ENCODE measurements at regions of chr5 and their contacts with region 1.

Region 1: GRCh38 chr5:132238169-132238744 is 10.6 kb upstream of the P4HA2 start:
- DNase-seq: peak; percentile 82 to 83
- H3K4me3 ChIP-seq: no peak overlapping the region
- H3K27ac ChIP-seq: no peak overlapping the region
- H3K4me1 ChIP-seq: no peaks in the 10 kb centered on the region
- H3K27me3 ChIP-seq: no peaks in the 10 kb centered on the region
- CTCF ChIP-seq: peak; percentile 83 to 86

Region 2: DNA sequence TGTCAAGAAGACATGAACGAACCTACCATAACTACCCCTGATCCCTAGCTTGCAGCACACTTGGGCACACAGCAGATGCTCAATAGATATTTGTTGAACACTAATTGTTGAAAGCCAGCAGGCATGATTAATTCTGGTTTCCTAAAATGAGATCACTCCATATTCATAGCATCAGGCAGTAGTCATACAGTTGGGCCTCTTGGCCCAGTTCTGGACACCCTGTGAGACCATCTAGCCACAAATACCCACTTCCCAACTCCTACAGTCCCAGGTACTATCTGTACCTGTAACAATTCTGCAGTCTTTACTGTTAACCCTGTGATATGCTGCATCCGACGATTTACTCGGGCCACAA is 34.8 kb before region 1 on chr5:
- intact Hi-C with region 1: no loop called
- DNase-seq: no peak
- H3K4me3 ChIP-seq: no peak overlapping the region
- H3K27ac ChIP-seq: no peak overlapping the region
- H3K4me1 ChIP-seq: peaks cover 0 to 18% (median 11%) of the 10 kb centered on the region in 4 donors
- H3K27me3 ChIP-seq: no peaks in the 10 kb centered on the region
- CTCF ChIP-seq: no peak

Region 3: DNA sequence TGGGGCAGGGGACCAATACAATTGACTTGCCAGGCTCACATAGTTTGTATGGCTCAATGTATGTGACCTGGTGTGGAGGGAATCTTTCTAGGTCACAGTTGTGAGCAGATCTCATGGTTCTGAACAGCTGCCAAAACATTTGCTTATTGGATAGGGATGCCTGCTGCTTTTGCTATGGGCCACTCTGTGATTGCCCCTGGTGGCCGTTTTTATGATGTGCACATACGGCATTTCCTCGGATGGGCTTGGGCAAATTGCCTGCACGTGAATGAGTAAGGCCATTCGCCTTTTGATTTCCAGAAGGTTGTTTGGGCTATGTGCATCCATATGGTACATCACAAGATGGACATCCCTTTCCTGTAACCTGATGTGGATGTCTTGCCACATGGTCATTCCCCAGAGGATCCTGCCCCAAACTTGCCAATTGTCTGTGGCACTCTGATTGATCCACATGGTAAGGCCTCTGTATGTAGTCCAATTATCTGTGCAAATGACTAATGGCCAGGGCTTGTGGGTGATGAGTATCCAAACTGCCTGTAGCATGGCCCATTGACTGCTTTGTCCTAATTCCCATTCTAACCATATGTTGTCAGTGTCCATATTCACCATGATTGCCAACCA is 45.3 kb after region 1 on chr5:
- intact Hi-C with region 1: loop called (anchors 2 kb)
- DNase-seq: no peak
- H3K4me3 ChIP-seq: no peak overlapping the region
- H3K27ac ChIP-seq: no peak overlapping the region
- H3K4me1 ChIP-seq: peaks cover 0 to 12% (median 9%) of the 10 kb centered on the region in 4 donors
- H3K27me3 ChIP-seq: no peaks in the 10 kb centered on the region
- CTCF ChIP-seq: peak; percentile 46 to 47

Region 4: GRCh38 chr5:132674671-132675506 is 436.6 kb after region 1 on chr5:
- intact Hi-C with region 1: no loop called
- DNase-seq: peak in 1 of 2 donors; percentile 68
- H3K4me3 ChIP-seq: peak overlapping the region; percentile 20 to 27
- H3K27ac ChIP-seq: peak overlapping the region; percentile 57 to 82
- H3K4me1 ChIP-seq: peaks cover 0 to 46% (median 23%) of the 10 kb centered on the region in 4 donors
- H3K27me3 ChIP-seq: no peaks in the 10 kb centered on the region
- CTCF ChIP-seq: no peak